ENCODE measurements at regions of chr19 and their contacts with region 1.

Region 1: GRCh38 chr19:6737284-6738046 is at the start of gene GPR108:
- DNase-seq: peak; percentile 98 to 100 (median 99)
- ATAC-seq: peak; percentile 74
- H3K4me3 ChIP-seq: peak within 1 kb of the TSS; percentile 83
- H3K4me3 Mint-ChIP-seq: peak within 1 kb of the TSS; percentile 96
- H3K27ac ChIP-seq: peak within 1 kb of the TSS; percentile 80 to 92
- H3K27ac Mint-ChIP-seq: peak within 1 kb of the TSS; percentile 97
- H3K4me1 ChIP-seq: peaks cover 42% of the 10 kb centered on the region
- H3K4me1 Mint-ChIP-seq: peaks cover 34% of the 10 kb centered on the region
- H3K27me3 ChIP-seq: peaks cover 0 to 3% of the 10 kb centered on the region in 2 experiments
- H3K27me3 Mint-ChIP-seq: no peaks in the 10 kb centered on the region
- CTCF ChIP-seq: no peak
- total RNA-seq, gene GPR108: 31.9 to 33.1 TPM

Region 2: GRCh38 chr19:6110360-6110977 is 627.0 kb before region 1 on chr19 and contains the start of gene RFX2:
- CTCF ChIA-PET with region 1: no interaction called
- POLR2A ChIA-PET with region 1: no interaction called
- intact Hi-C with region 1: loop called in 1 of 2 experiments (anchors 5 kb)
- DNase-seq: peak; percentile 98 to 99 (median 99)
- ATAC-seq: peak; percentile 97
- H3K4me3 ChIP-seq: peak within 1 kb of the TSS; percentile 59
- H3K4me3 Mint-ChIP-seq: peak within 1 kb of the TSS; percentile 89
- H3K27ac ChIP-seq: peak within 1 kb of the TSS; percentile 52 to 58
- H3K27ac Mint-ChIP-seq: peak within 1 kb of the TSS; percentile 80
- H3K4me1 ChIP-seq: peaks cover 14% of the 10 kb centered on the region
- H3K4me1 Mint-ChIP-seq: peaks cover 17% of the 10 kb centered on the region
- H3K27me3 ChIP-seq: peaks cover 0 to 13% of the 10 kb centered on the region in 2 experiments
- H3K27me3 Mint-ChIP-seq: peaks cover 3% of the 10 kb centered on the region
- CTCF ChIP-seq: no peak
- total RNA-seq, gene RFX2: 9.0 to 12.4 TPM

Region 3: DNA sequence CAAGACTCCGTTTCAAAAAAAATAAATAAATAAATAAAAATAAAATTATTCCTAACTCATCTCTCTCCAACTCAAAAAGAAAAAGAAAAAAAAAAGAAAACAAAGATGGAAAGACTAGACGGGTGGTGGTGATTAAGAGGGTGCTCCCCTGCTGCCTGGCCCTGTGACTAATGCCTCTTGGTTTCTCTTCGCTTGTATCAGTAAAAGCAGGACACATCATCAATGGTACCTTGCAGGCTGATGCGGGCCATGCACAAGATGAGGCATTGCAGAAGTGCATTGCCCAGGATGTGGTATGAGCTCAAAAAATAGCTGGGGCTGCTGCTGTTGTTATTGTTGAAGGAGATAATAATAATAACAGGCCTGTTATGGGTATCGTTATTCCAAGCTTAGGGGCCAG is 418.7 kb before region 1 on chr19:
- CTCF ChIA-PET with region 1: no interaction called
- POLR2A ChIA-PET with region 1: no interaction called
- intact Hi-C with region 1: no loop called
- DNase-seq: no peak
- ATAC-seq: no peak
- H3K4me3 ChIP-seq: no peak overlapping the region
- H3K4me3 Mint-ChIP-seq: no peak overlapping the region
- H3K27ac ChIP-seq: no peak overlapping the region
- H3K27ac Mint-ChIP-seq: no peak overlapping the region
- H3K4me1 ChIP-seq: no peaks in the 10 kb centered on the region
- H3K4me1 Mint-ChIP-seq: no peaks in the 10 kb centered on the region
- H3K27me3 ChIP-seq: no peaks in the 10 kb centered on the region
- H3K27me3 Mint-ChIP-seq: no peaks in the 10 kb centered on the region
- CTCF ChIP-seq: no peak

Region 4: DNA sequence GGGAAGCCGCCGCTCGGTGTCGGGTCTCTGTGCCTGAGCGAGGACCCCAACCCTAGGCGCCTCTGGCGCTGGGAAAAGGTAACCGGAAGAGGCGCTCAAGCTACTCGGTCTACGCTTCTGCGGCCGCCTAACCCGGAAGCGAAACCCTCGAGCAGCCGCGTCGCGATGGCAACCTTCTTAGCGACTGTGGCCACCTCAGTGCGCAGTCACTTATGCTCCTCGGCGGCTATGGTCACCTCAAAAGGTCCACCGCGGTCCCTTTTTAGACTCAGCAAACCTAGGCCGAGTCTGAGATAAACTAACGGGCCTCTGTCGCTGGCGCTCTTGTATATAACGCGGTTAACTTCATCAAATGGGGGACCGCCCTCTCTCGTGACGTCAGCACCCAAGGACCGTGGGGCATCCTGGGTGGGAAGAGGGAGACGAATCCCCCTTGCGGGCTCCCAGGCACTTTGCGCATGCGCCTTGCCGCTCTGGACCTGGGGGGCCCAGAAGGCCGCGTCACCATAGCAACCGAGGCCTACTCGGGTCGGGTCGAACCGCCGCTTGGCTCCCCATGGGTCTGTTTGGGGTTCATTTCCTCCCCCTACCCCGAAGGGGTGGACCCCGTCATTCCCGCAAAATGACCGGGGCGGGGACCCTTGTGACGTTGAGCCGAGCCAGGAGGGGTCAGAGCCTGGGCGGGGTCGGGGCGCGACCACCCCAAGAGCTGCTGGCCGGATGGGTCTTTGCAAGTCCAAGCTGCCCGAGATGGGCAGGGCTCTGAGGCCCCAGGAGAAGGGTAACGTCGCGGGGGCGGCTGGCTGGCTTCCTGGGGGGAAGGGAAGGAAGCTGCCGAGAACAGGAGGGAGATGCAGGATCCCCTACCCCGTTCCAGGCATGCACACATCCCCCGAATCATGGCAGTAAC is 344.1 kb before region 1 on chr19 and contains the start of gene GTF2F1:
- CTCF ChIA-PET with region 1: no interaction called
- POLR2A ChIA-PET with region 1: no interaction called
- intact Hi-C with region 1: loop called in 1 of 2 experiments (anchors 1 kb)
- DNase-seq: peak; percentile 89 to 98 (median 95)
- ATAC-seq: peak; percentile 84
- H3K4me3 ChIP-seq: peak within 1 kb of the TSS; percentile 89 to 97
- H3K4me3 Mint-ChIP-seq: peak within 1 kb of the TSS; percentile 88
- H3K27ac ChIP-seq: peak within 1 kb of the TSS; percentile 98 to 100
- H3K27ac Mint-ChIP-seq: peak within 1 kb of the TSS; percentile 98
- H3K4me1 ChIP-seq: peaks cover 16% of the 10 kb centered on the region
- H3K4me1 Mint-ChIP-seq: peaks cover 25% of the 10 kb centered on the region
- H3K27me3 ChIP-seq: no peaks in the 10 kb centered on the region
- H3K27me3 Mint-ChIP-seq: no peaks in the 10 kb centered on the region
- CTCF ChIP-seq: no peak
- total RNA-seq, gene GTF2F1: 65.2 to 67.9 TPM

Region 5: DNA sequence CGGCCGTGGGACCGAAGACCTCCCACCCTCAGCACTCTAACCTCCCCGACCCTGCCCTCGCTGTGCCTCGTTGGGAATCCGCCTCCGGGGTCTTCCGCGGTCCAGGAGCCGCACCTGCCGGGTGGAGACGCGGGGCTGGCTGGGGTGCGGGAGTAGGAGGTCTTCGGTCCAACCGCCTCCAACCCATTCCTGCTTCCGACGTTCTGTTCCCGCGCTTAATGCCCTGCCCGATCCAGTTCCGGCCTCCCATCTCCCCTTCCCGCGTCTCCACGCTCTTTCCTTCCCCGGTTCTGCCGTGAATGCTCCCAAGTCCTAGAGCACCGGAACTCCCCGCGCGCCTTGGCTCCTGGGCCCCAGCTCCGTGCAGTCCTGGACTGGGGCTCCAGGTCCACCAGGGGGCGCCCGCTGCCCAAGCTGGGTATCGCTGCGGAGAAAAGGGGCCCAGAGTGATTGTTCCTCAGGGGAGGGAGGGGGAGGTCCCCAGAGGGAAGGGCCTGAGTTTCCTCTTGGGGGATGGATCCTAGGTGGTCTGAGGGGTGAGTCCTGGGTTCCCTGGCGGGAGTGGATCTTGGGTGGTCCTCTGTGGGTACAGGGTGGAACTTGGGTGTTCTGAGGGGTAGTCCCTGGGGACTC is 220.7 kb before region 1 on chr19:
- CTCF ChIA-PET with region 1: interaction called, 5 read pairs
- POLR2A ChIA-PET with region 1: no interaction called
- intact Hi-C with region 1: loop called (anchors 1 kb)
- DNase-seq: peak; percentile 80 to 97 (median 91)
- ATAC-seq: peak; percentile 85
- H3K4me3 ChIP-seq: peak overlapping the region; percentile 78
- H3K4me3 Mint-ChIP-seq: peak overlapping the region; percentile 90
- H3K27ac ChIP-seq: peak overlapping the region in 1 of 2 experiments; percentile 52
- H3K27ac Mint-ChIP-seq: peak overlapping the region; percentile 33
- H3K4me1 ChIP-seq: peaks cover 26% of the 10 kb centered on the region
- H3K4me1 Mint-ChIP-seq: peaks cover 31% of the 10 kb centered on the region
- H3K27me3 ChIP-seq: no peaks in the 10 kb centered on the region
- H3K27me3 Mint-ChIP-seq: no peaks in the 10 kb centered on the region
- CTCF ChIP-seq: peak; percentile 85

Region 6: GRCh38 chr19:6674868-6675305 is 62.6 kb before region 1 on chr19:
- CTCF ChIA-PET with region 1: no interaction called
- POLR2A ChIA-PET with region 1: no interaction called
- intact Hi-C with region 1: loop called (anchors 2 kb)
- DNase-seq: peak; percentile 56 to 93 (median 86)
- ATAC-seq: peak; percentile 67
- H3K4me3 ChIP-seq: peak overlapping the region in 1 of 2 experiments; percentile 31
- H3K4me3 Mint-ChIP-seq: peak overlapping the region; percentile 50
- H3K27ac ChIP-seq: peak overlapping the region in 1 of 2 experiments; percentile 6
- H3K27ac Mint-ChIP-seq: peak overlapping the region; percentile 84
- H3K4me1 ChIP-seq: peaks cover 33% of the 10 kb centered on the region
- H3K4me1 Mint-ChIP-seq: peaks cover 45% of the 10 kb centered on the region
- H3K27me3 ChIP-seq: no peaks in the 10 kb centered on the region
- H3K27me3 Mint-ChIP-seq: no peaks in the 10 kb centered on the region
- CTCF ChIP-seq: no peak

Region 7: GRCh38 chr19:6801485-6802086 is 64.1 kb after region 1 on chr19:
- CTCF ChIA-PET with region 1: interaction called, 14 read pairs
- POLR2A ChIA-PET with region 1: interaction called, 15 read pairs
- intact Hi-C with region 1: loop called (anchors 1 kb)
- DNase-seq: peak; percentile 54 to 96 (median 87)
- ATAC-seq: peak; percentile 78
- H3K4me3 ChIP-seq: peak overlapping the region; percentile 71 to 79
- H3K4me3 Mint-ChIP-seq: peak overlapping the region; percentile 87
- H3K27ac ChIP-seq: peak overlapping the region; percentile 74 to 91
- H3K27ac Mint-ChIP-seq: peak overlapping the region; percentile 95
- H3K4me1 ChIP-seq: peaks cover 48% of the 10 kb centered on the region
- H3K4me1 Mint-ChIP-seq: peaks cover 68% of the 10 kb centered on the region
- H3K27me3 ChIP-seq: no peaks in the 10 kb centered on the region
- H3K27me3 Mint-ChIP-seq: no peaks in the 10 kb centered on the region
- CTCF ChIP-seq: no peak

Region 8: GRCh38 chr19:7197760-7198696 is 460.6 kb after region 1 on chr19:
- CTCF ChIA-PET with region 1: no interaction called
- POLR2A ChIA-PET with region 1: no interaction called
- intact Hi-C with region 1: loop called in 1 of 2 experiments (anchors 5 kb)
- DNase-seq: peak; percentile 80 to 98 (median 89)
- ATAC-seq: peak; percentile 83
- H3K4me3 ChIP-seq: peak overlapping the region; percentile 67 to 76
- H3K4me3 Mint-ChIP-seq: peak overlapping the region; percentile 90
- H3K27ac ChIP-seq: peak overlapping the region; percentile 73
- H3K27ac Mint-ChIP-seq: peak overlapping the region; percentile 95
- H3K4me1 ChIP-seq: peaks cover 17% of the 10 kb centered on the region
- H3K4me1 Mint-ChIP-seq: peaks cover 14% of the 10 kb centered on the region
- H3K27me3 ChIP-seq: no peaks in the 10 kb centered on the region
- H3K27me3 Mint-ChIP-seq: peaks cover 2% of the 10 kb centered on the region
- CTCF ChIP-seq: no peak

Measured in CD8-positive, alpha-beta T cell (primary cell).